Caco-2 (cell line): ENCODE measurements at regions of chr10 and their contacts with region 1.

Region 1: GRCh38 chr10:11684717-11685645 is 57.2 kb upstream of the ECHDC3 start:
- DNase-seq: peak; percentile 63 to 85
- H3K4me3 ChIP-seq: peak overlapping the region; percentile 12
- H3K4me3 Mint-ChIP-seq: peak overlapping the region; percentile 58
- H3K27ac Mint-ChIP-seq: peak overlapping the region; percentile 99
- H3K4me1 ChIP-seq: peaks cover 69% of the 10 kb centered on the region
- H3K4me1 Mint-ChIP-seq: peaks cover 71% of the 10 kb centered on the region
- H3K27me3 ChIP-seq: no peaks in the 10 kb centered on the region
- H3K27me3 Mint-ChIP-seq: no peaks in the 10 kb centered on the region
- CTCF ChIP-seq: no peak

Region 2: GRCh38 chr10:11602919-11603523 is 82.0 kb before region 1 on chr10:
- CTCF ChIA-PET with region 1: no interaction called
- POLR2A ChIA-PET with region 1: no interaction called
- intact Hi-C with region 1: loop called (anchors 2 kb)
- DNase-seq: peak in 1 of 2 experiments; percentile 65
- H3K4me3 ChIP-seq: no peak overlapping the region
- H3K4me3 Mint-ChIP-seq: peak overlapping the region; percentile 49
- H3K27ac Mint-ChIP-seq: peak overlapping the region; percentile 39
- H3K4me1 ChIP-seq: peaks cover 52% of the 10 kb centered on the region
- H3K4me1 Mint-ChIP-seq: peaks cover 50% of the 10 kb centered on the region
- H3K27me3 ChIP-seq: no peaks in the 10 kb centered on the region
- H3K27me3 Mint-ChIP-seq: no peaks in the 10 kb centered on the region
- CTCF ChIP-seq: no peak

Region 3: GRCh38 chr10:11611248-11612020 is 73.5 kb before region 1 on chr10 and contains the start of gene USP6NL:
- CTCF ChIA-PET with region 1: no interaction called
- POLR2A ChIA-PET with region 1: interaction called, 3 read pairs
- intact Hi-C with region 1: loop called (anchors 2 kb)
- DNase-seq: peak; percentile 95 to 99
- H3K4me3 ChIP-seq: peak within 1 kb of the TSS; percentile 94
- H3K4me3 Mint-ChIP-seq: peak within 1 kb of the TSS; percentile 82
- H3K27ac Mint-ChIP-seq: peak within 1 kb of the TSS; percentile 81
- H3K4me1 ChIP-seq: peaks cover 46% of the 10 kb centered on the region
- H3K4me1 Mint-ChIP-seq: peaks cover 25% of the 10 kb centered on the region
- H3K27me3 ChIP-seq: no peaks in the 10 kb centered on the region
- H3K27me3 Mint-ChIP-seq: no peaks in the 10 kb centered on the region
- CTCF ChIP-seq: no peak
- total RNA-seq, gene USP6NL: 34.1 and 35.6 TPM in 2 replicates

Region 4: DNA sequence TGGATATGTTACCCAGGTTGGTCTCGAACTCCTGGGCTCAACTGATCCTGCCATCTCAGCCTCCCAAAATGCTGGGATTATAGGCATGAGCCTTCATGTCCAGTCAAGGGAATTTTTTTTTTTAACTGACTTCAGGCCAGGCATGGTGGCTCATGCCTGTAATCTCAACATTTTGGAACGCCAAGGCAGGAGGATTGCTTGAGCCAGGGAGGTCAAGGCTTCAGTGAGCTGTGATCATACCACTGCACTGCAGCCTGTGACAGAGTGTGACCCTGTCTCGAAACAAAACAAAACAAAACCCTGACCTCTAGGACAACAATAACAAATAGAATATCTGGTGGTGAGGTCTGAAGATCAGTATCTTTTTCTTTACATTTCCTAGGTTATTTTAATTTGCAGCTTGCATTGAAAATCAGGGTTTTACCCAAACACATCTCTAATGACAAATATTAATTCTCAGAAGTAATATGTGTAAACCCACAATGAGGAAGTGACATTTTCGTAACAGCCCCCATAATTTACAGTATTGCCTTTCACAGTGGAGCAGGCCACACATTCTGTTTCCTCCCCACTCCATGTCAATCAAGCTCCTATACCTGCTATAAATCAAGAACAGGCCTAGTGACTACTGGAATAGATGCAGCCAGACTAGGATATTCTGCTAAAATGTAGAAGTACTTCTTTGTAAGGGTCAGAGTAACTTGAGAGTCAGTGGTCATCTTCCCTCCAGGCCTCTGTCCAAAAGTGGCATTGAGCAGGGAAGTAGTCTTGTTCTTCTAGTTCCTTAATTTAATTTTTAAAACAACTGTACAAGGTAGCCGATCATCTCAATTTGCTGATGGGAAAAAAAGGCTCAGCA is 13.9 kb after region 1 on chr10:
- CTCF ChIA-PET with region 1: no interaction called
- POLR2A ChIA-PET with region 1: no interaction called
- intact Hi-C with region 1: no loop called
- DNase-seq: no peak
- H3K4me3 ChIP-seq: no peak overlapping the region
- H3K4me3 Mint-ChIP-seq: no peak overlapping the region
- H3K27ac Mint-ChIP-seq: no peak overlapping the region
- H3K4me1 ChIP-seq: peaks cover 9% of the 10 kb centered on the region
- H3K4me1 Mint-ChIP-seq: peaks cover 14% of the 10 kb centered on the region
- H3K27me3 ChIP-seq: no peaks in the 10 kb centered on the region
- H3K27me3 Mint-ChIP-seq: no peaks in the 10 kb centered on the region
- CTCF ChIP-seq: no peak

Region 5: DNA sequence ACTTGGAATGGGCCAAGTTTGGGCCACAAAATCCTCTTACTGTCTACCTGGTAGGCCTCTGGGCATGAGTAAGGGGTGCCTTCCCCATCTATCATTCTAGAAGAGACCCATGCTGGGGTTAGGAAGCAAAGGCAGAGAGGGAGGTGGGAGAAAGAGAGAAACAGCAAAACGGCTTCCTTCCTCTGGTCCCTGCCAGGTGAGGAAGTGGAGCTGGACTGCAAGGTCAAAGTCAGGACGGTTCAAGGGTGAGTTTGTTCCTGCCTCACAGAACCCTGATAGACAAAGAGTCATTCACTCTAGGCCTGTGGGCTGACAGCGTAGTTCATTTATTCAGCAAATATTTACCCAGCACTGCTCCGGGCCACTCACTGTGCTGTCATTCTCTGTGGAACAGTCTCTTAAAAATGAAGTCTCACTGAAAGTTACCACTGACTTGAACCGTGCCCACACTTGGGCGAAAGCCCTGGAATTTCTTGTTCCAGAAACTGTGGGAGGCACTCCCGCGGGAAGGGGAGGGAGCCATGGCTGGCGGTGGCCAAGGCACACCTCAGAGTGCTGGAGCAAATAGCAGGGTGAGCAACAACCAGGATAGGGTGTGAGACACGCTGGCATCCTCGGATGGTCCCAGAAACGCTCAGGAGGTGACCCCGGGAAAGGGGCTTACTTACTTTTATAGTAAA is 31.0 kb after region 1 on chr10:
- CTCF ChIA-PET with region 1: no interaction called
- POLR2A ChIA-PET with region 1: interaction called, 3 read pairs
- intact Hi-C with region 1: loop called (anchors 2 kb)
- DNase-seq: peak; percentile 50 to 63
- H3K4me3 ChIP-seq: no peak overlapping the region
- H3K4me3 Mint-ChIP-seq: peak overlapping the region; percentile 1
- H3K27ac Mint-ChIP-seq: no peak overlapping the region
- H3K4me1 ChIP-seq: peaks cover 14% of the 10 kb centered on the region
- H3K4me1 Mint-ChIP-seq: peaks cover 12% of the 10 kb centered on the region
- H3K27me3 ChIP-seq: no peaks in the 10 kb centered on the region
- H3K27me3 Mint-ChIP-seq: no peaks in the 10 kb centered on the region
- CTCF ChIP-seq: no peak